ENCODE measurements at regions of chrX and their contacts with region 1.

Region 1: GRCh38 chrX:39149761-39150160 is 348.5 kb downstream of the MID1IP1 start:
- DNase-seq: peak in 1 of 2 experiments; percentile 83
- H3K4me3 ChIP-seq: peak overlapping the region in 1 of 4 experiments; percentile 26; a peak in 1 of 8 replicates
- H3K27ac ChIP-seq: no peak overlapping the region
- H3K4me1 ChIP-seq: 0 out of 7 replicates have a peak, but pooled peaks cover 0 to 2% (median 0%) of the 10 kb centered on the region in 4 experiments
- H3K27me3 ChIP-seq: no peaks in the 10 kb centered on the region
- CTCF ChIP-seq: peak; percentile 61 to 75 (median 73); a peak in 3 of 4 replicates
- EP300 ChIP-seq: no peak
- POLR2A ChIP-seq: no peak
- RAD21 ChIP-seq: peak; percentile 77 to 78

Region 2: DNA sequence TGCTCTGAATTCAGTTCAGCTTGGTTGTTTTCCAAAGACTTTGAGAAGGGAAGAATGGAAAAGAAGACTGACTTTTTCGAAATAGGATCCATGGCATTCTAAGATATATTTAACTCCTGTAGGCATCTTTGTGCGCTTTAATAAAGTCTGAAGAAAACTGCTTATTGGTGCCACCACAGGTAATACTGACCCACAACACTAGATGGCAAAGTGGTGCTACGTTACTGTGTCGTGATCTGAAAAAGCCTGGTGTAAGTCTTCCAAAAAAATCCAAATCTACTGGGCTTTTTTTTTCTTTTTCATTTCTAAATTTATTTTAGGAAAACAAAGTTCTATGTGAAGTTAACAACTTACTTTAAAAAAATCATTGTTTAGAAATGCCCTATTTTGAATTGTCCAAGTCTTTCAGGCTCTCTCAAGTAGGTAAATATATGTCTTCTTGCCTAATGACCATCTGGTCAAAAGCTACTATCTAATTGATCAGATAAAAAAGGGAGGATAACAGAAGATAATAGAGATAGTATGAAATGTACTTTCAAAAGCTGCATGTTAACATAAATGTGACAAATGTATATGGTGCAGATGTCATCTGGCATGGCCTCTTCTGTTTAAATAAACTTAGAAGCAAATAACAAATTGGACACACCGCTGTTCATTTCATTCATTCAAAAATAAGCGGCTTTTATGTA is 395.5 kb before region 1 on chrX:
- CTCF ChIA-PET with region 1: interaction called, 54 read pairs
- POLR2A ChIA-PET with region 1: no interaction called
- DNase-seq: no peak
- H3K4me3 ChIP-seq: no peak overlapping the region
- H3K27ac ChIP-seq: no peak overlapping the region
- H3K4me1 ChIP-seq: peaks cover 0 to 7% (median 2%) of the 10 kb centered on the region in 4 experiments; a peak in 4 of 7 replicates
- H3K27me3 ChIP-seq: no peaks in the 10 kb centered on the region
- CTCF ChIP-seq: peak in 2 of 3 experiments; percentile 44 to 50; a peak in 3 of 4 replicates
- EP300 ChIP-seq: no peak
- POLR2A ChIP-seq: no peak
- RAD21 ChIP-seq: peak; percentile 81 to 84

Region 3: GRCh38 chrX:39133971-39134370 is 15.8 kb before region 1 on chrX:
- CTCF ChIA-PET with region 1: interaction called, 17 read pairs
- POLR2A ChIA-PET with region 1: no interaction called
- DNase-seq: peak; percentile 1 to 54
- H3K4me3 ChIP-seq: no peak overlapping the region
- H3K27ac ChIP-seq: no peak overlapping the region
- H3K4me1 ChIP-seq: peaks cover 0 to 5% (median 0%) of the 10 kb centered on the region in 4 experiments; a peak in 1 of 7 replicates
- H3K27me3 ChIP-seq: no peaks in the 10 kb centered on the region
- CTCF ChIP-seq: peak; percentile 42 to 65 (median 58)
- EP300 ChIP-seq: no peak
- POLR2A ChIP-seq: no peak
- RAD21 ChIP-seq: peak; percentile 50 to 53